ENCODE measurements at regions of chr17 and their contacts with region 1.

Region 1: GRCh38 chr17:78013683-78014467 is 55.4 kb downstream of the TNRC6C start:
- DNase-seq: no peak
- ATAC-seq: peak; percentile 44

Region 2: DNA sequence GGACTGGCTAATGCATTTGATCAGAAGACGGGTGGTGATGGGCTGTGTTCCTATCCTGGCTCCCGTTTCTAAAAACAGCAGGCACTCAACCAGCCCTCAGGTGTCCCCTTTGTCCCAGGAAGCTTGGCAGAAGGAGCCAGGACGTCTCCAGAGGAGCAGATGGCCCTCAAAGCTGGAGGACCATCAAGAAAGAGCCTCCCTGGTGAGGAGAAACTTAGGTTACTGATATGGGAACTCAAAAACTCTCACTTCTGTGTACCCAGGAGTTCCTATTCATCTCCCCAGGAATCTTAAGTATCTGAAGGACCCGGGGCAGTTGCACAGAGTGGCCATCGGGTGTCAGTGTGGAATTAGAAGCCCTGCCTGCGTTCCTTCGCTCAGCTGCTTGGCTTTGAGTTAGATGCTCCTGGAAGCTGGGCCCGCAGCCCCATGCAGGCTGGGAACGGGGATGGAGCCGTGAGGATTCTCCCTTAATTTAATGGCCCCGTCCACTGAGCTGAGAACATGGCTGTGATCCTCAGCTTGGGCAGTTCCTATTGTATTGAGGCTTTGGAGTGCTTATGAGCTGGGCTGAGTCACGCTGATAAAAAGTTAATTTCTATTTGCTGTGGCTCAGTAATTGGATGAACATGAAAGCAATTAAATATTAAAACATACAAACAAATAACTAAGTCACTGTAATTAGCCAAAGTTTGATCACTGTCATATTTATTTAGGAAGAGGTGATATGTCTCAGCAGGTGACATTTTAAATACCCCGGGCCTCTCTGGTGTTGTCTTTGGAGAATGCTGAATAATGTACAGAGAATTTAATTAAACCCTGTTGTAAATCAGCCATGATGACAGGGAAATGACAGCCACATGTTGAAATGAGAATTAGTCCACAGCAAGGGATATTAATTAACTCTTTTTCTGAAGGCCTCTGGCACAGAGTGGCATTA is 471.1 kb before region 1 on chr17:
- intact Hi-C with region 1: loop called in 1 of 2 experiments (anchors 2 kb)
- DNase-seq: peak; percentile 61 to 80
- ATAC-seq: peak; percentile 76

Region 3: DNA sequence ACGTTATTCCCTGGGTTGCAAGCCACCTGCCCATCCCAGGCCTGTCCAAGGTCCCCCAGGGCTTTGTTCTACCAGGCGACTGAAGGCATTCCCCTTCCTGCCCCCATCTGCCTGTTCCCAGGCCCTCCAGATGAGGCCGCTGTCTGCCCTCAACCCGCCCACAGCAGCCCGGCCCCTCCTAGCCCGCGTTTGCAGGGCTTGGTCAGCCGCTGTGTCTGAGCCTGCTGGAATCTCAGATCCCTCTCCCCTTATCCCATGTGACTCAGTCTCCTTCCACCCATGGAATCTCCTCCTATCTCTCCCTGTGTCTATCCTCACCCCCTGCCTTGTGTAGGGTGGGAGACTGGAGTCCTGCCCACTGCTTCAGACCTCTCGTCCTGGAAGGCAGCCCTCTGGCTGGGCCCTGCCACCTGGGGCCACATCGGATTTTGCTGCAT is 241.4 kb before region 1 on chr17:
- intact Hi-C with region 1: loop called in 1 of 2 experiments (anchors 10 kb)
- DNase-seq: peak; percentile 33 to 73
- ATAC-seq: peak; percentile 97